Activated T-helper 2 cell treated with anti-CD3 and anti-CD28 coated beads, Interferon-gamma antibody, Interleukin-2, Interleukin-4, amounts not matched to agents 10 μg/mL and 5 μg/mL and 100 μg/mL, durations not matched to agents 14 hours and 24 hours and 36 hours (primary cell): ENCODE measurements at regions of chr1 and their contacts with region 1.

Region 1: GRCh38 chr1:173867753-173868265 is at the start of gene GAS5:
- DNase-seq: peak; percentile 99
- H3K4me3 Mint-ChIP-seq: peak within 1 kb of the TSS; percentile 98
- H3K27ac Mint-ChIP-seq: peak within 1 kb of the TSS; percentile 96
- H3K4me1 Mint-ChIP-seq: peaks cover 49% of the 10 kb centered on the region
- H3K27me3 Mint-ChIP-seq: no peaks in the 10 kb centered on the region
- total RNA-seq, gene GAS5: 650 and 661 TPM in 2 replicates

Region 2: DNA sequence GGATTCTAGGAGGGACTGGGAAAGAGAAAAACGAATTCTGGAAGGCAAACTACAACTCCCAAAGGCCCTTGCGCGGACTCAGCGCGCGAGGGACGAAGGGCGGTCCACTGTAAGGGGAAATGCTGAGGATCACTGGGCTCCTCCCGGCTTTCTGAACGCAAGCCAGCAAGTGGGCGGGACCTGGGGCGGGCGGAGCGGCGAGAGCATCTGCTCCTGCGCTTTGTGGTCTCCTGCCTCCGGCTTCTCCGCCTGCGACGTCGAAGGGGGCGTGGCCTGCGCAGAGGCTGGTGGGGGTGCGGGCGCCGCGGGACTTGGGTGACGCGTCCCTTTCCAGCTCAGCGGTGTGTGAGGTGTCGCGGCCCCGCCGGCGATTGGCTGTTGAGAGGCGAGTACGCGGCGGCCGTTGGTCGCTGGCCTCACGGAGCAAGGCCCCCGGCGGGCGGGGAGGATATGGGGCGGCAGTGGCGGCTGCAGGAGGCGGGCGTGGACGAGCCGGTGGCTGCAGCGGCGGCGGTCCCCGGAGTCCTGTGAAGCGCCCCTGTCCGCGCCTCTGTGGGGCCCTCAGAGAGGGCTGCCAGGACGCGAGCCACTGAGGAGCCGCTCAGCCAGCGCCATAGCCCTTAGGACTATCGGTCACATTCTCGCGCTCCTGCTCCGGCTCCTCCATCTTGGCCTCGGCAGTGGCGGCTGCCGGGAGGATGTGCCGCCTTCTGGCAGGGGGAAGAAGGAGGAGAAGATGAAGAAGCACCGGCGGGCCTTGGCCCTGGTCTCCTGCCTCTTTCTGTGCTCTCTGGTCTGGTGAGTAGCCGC is 1334.9 kb before region 1 on chr1 and contains the start of gene SUCO:
- intact Hi-C with region 1: loop called (anchors 2 kb)
- DNase-seq: peak; percentile 100
- H3K4me3 Mint-ChIP-seq: peak within 1 kb of the TSS; percentile 95
- H3K27ac Mint-ChIP-seq: peak within 1 kb of the TSS; percentile 99
- H3K4me1 Mint-ChIP-seq: peaks cover 38% of the 10 kb centered on the region
- H3K27me3 Mint-ChIP-seq: peaks cover 9% of the 10 kb centered on the region
- total RNA-seq, gene SUCO: 28.2 and 33.3 TPM in 2 replicates

Region 3: DNA sequence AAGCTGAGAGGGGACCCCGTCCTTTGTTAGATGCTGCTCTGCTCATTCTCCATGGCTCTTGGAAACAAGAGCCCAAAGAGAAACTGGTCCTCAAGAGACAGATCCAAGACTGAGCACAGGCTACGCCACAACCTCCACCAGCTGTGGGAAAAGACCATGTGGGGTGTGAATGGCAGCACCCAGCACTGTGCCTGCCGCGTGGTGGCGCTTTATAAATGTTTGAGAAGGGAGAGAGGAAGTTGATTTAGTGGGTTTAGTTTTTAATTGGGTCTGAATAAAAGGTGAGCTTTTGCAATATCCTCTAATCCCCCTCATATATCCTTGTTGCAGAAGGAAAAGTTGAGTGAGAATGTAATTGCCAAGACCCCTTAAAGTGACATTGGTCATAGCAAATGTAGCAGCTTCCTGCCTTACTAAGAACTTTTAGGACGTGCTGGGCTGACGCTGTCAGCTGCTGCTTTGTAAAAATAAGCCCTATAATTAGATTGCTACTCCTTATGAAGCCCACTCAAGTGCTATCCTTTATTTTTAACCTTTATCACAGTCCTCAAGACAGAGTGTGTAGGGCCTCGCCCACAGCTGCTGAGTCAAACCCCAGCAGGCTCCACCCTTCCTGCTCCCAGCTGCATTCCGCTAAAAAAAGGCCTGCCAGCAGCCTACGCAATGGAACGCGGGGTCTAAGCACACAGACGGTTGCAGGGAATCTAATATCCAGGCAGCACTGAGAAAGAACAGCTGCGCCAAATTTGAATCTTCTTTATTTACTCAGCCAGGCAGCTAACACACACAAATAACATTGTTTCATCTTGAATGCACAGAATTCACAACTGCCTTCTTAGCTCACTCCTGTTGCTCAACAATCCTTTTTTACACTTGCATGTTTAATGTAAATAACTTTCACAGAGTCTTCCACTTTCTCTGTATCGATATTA is 438.1 kb before region 1 on chr1:
- intact Hi-C with region 1: loop called (anchors 2 kb)
- DNase-seq: peak; percentile 42
- H3K4me3 Mint-ChIP-seq: peak overlapping the region; percentile 38
- H3K27ac Mint-ChIP-seq: peak overlapping the region; percentile 47
- H3K4me1 Mint-ChIP-seq: peaks cover 18% of the 10 kb centered on the region
- H3K27me3 Mint-ChIP-seq: no peaks in the 10 kb centered on the region

Region 4: GRCh38 chr1:173954179-173954578 is 86.4 kb after region 1 on chr1:
- intact Hi-C with region 1: loop called (anchors 5 kb)
- DNase-seq: no peak
- H3K4me3 Mint-ChIP-seq: no peak overlapping the region
- H3K27ac Mint-ChIP-seq: no peak overlapping the region
- H3K4me1 Mint-ChIP-seq: peaks cover 12% of the 10 kb centered on the region
- H3K27me3 Mint-ChIP-seq: no peaks in the 10 kb centered on the region

Region 5: DNA sequence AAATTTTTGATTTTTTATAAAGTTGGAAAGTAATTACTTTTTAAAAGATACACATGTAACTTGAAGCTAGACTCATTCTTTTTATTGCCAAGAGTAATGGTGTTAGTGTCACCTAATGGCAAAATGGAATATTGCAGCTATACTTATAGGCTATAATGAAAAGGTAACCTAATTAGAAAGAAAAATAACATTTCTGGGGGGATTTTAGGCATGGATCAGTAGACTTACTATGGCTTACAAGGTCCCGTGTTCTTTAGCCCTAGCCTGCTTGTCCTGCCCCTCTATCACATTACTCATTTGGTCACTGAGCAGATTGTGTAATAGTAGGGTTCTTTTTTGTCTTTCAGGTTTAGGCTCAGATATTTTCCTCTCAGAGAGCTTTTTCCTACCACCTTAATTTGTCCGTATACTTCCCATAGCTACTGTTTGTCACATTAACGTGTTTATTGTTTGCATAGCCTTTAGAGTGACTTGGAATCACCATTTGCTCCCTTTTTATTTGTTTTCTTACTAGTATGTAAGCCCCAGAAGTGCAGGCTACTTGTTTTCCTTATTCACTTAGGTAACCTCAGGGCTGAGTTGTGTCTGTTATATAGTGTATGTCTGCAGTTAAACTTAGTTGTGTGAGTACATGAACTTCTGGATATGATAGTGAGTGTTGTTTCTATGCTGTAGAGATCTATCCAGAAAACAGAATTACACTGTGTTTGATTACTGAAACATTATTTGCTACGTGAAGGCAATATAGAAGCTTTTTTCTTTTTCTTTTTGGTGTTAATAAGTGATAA is 350.2 kb after region 1 on chr1:
- intact Hi-C with region 1: loop called (anchors 10 kb)
- DNase-seq: no peak
- H3K4me3 Mint-ChIP-seq: no peak overlapping the region
- H3K27ac Mint-ChIP-seq: no peak overlapping the region
- H3K4me1 Mint-ChIP-seq: no peaks in the 10 kb centered on the region
- H3K27me3 Mint-ChIP-seq: no peaks in the 10 kb centered on the region